Thyroid gland (tissue), 4 donors: ENCODE measurements at regions of chrX and their contacts with region 1.

Region 1: DNA sequence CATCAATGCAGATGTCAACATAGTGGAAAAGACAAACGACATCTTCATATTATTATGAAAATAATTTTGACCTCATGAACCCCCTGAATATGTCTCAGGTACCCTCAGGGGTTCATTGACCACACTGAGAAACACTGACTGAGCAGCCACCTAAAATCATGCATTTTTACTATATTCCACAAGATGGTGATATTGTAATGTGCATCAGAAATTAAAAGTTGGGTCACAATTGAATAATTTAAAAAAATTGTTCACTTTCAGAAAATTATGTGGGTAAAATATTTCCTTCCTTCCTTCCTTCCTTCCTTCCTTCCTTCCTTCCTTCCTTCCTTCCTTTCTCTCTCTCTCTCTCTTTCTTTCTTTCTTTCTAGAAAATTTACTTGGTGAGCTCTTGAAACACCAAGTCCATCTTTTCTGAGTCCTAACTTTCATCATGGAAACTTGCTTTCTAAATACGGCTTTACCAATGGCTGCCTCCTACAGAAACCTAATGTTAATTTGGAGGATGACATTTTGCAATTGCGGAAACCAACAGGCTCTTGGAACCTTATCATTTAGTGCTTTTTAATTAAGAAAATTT is 103.6 kb downstream of the RTL3 start:
- DNase-seq: no peak
- H3K4me3 ChIP-seq: no peak overlapping the region
- H3K27ac ChIP-seq: no peak overlapping the region
- H3K4me1 ChIP-seq: no peaks in the 10 kb centered on the region
- H3K27me3 ChIP-seq: no peaks in the 10 kb centered on the region
- CTCF ChIP-seq: peak in 4 of 6 experiments; percentile 11 to 56 (median 44)
- POLR2A ChIP-seq: no peak

Region 2: DNA sequence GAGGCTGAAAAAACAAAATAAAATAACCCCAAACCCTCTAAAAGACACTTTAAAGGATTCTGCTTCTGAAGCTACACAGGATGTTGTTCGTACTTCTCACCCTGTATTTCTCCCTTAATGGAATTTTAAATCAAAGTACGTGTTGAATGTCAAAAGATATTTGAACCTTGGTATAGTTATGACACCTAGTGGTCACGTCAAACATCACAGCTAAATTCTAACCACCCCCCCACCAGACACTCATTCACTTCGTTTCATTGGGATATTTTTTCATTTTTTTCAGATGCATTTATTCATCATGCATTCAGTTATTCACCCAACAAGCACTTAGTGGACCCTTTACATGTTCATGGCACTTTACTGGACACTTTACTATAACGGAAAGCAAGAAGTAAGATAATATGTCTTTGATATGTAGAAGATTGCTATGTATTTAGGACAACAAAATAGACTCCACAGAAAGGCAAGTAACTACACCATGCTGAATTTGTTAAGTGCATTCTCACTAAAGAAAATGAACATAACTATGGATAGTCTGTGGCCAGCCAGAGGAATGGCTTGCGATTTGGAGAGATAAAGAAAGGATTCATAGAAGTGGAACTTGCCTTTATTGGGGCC is 526.5 kb after region 1 on chrX:
- intact Hi-C with region 1: loop called (anchors 10 kb)
- DNase-seq: peak; percentile 1 to 2
- H3K4me3 ChIP-seq: no peak overlapping the region
- H3K27ac ChIP-seq: no peak overlapping the region
- H3K4me1 ChIP-seq: no peaks in the 10 kb centered on the region
- H3K27me3 ChIP-seq: no peaks in the 10 kb centered on the region
- CTCF ChIP-seq: peak in 5 of 6 experiments; percentile 18 to 75 (median 48)
- POLR2A ChIP-seq: no peak